ENCODE measurements at regions of chr17 and their contacts with region 1.

Region 1: DNA sequence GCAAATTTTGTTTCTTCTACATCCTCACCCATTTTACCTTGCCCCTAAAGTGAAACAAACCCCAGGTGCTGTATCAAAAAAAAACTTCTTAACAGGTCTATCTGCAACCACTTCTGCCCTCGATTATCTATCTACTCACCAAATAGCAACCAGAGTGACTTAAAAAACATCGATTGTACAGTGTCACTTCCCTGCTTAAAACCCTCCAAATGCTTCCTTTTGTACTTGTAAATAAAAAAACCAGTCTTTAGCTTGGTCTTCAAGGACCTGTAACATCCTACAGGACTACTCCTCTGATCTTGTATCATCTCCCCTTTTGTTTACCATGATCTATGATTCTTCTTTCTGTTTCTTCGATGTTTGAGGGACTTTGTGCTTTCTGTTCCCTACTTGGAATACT is 82.7 kb upstream of the CORO6 start:
- DNase-seq: no peak
- H3K4me3 Mint-ChIP-seq: peak overlapping the region; percentile 35
- H3K27ac Mint-ChIP-seq: peak overlapping the region; percentile 100
- H3K4me1 Mint-ChIP-seq: peaks cover 45% of the 10 kb centered on the region
- H3K27me3 Mint-ChIP-seq: no peaks in the 10 kb centered on the region

Region 2: DNA sequence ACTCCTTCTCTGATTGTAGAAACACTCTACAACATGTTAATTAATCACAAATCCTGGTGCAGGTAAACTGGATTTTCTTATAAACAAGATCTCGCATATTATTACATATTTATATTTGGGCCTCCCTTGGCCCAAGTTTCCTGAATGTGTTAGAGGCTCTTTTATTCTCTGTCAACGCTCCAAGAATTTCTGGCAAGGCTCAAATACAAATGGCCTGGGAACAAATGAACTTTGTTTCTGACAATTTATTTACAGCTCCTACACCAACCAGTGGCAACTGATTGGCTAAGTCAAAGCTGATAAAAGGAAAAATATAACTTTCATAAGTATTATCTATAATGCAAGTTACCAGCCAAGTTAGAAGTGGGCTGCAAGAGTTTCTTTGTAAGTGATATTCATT is 17.8 kb before region 1 on chr17:
- CTCF ChIA-PET with region 1: interaction called, 16 read pairs
- POLR2A ChIA-PET with region 1: interaction called, 47 read pairs
- DNase-seq: no peak
- H3K4me3 Mint-ChIP-seq: no peak overlapping the region
- H3K27ac Mint-ChIP-seq: no peak overlapping the region
- H3K4me1 Mint-ChIP-seq: peaks cover 17% of the 10 kb centered on the region
- H3K27me3 Mint-ChIP-seq: no peaks in the 10 kb centered on the region

Region 3: GRCh38 chr17:29693769-29694168 is 11.6 kb before region 1 on chr17:
- CTCF ChIA-PET with region 1: interaction called, 16 read pairs
- POLR2A ChIA-PET with region 1: interaction called, 47 read pairs
- DNase-seq: no peak
- H3K4me3 Mint-ChIP-seq: no peak overlapping the region
- H3K27ac Mint-ChIP-seq: peak overlapping the region; percentile 0
- H3K4me1 Mint-ChIP-seq: peaks cover 23% of the 10 kb centered on the region
- H3K27me3 Mint-ChIP-seq: no peaks in the 10 kb centered on the region

Region 4: DNA sequence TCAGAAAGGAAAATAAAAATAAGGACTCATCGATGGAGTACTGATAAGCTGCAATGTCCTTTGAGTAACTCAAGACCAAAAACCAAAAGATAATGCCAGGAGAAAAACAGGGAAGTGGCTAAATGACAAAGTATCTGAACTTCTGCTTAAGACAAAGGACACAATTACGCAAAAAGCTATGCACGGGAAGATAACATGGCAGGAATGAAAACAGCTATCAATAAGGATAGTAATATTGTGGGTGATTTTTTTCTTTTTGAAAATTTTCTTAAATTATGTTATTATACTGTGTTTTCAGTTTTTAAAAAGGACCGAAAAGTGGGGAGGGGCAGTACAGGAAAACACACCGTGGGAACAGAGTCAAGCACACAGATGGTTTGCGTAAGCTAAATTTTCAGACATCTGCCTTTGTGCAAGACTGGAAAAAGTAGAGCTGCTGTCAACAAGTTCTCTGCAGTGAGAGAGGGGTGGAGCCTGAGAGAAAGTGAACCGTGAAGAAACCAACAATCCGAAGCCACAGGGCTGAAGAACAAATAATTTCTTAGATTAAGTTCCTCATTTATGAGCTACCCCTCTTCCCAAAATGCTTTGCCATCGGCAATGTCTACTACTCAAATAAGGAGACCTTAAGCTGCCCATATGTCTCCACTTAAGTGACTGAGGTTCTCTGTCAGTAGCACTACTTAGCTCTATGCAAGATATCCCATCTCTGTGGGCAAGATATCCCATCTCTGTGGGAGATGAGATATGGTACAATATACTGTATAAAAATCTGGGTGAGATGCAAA is 17.2 kb after region 1 on chr17:
- CTCF ChIA-PET with region 1: interaction called, 7 read pairs
- POLR2A ChIA-PET with region 1: interaction called, 31 read pairs
- DNase-seq: peak; percentile 26
- H3K4me3 Mint-ChIP-seq: no peak overlapping the region
- H3K27ac Mint-ChIP-seq: peak overlapping the region; percentile 4
- H3K4me1 Mint-ChIP-seq: peaks cover 50% of the 10 kb centered on the region
- H3K27me3 Mint-ChIP-seq: no peaks in the 10 kb centered on the region

Region 5: DNA sequence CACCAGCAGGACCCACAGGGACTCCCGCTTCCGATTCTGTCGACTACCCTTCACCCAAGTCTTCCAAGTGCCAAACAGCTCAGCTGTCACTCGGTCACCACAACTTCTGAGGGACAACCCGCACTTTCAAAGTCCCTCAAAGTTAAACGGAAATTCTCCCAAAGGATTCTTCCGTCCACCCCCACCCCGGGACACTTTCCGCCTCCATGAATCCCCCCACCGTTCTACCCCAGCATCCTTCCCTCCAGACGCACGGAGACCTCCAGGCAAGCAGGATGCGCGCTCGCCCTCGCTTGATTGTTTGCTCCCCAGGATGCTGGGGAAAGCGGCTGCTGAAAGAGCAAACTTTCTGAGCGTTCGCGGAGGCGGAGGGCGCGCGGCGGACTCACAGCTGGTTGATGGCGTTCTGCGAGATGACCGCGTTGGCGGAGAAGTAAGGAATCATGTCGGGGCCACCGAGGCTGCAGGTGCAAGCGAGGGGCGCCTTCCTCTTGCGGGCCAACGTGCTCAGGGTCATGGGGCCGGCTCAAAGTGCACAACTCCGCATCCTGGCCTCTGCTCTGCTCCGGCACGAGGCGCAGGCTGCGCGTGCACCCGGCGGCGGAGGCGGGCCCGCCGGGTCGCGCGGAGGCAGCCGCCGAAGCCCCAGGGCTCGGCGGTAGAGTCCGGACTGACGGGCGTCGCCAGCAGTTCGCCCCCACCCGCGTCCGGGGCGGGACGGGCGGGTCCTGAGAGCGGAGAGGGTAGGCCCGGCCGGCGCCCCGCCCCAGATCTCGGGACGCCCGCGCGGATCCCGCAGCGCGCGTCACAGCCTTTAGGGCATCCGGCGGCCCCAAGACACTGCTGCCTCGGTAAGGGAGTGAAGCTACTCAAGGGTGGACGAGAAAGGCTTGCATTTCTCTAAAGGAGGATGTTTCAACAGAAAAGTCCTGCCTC is 55.6 kb after region 1 on chr17:
- CTCF ChIA-PET with region 1: no interaction called
- POLR2A ChIA-PET with region 1: interaction called, 94 read pairs
- DNase-seq: peak; percentile 95
- H3K4me3 Mint-ChIP-seq: peak overlapping the region; percentile 91
- H3K27ac Mint-ChIP-seq: peak overlapping the region; percentile 95
- H3K4me1 Mint-ChIP-seq: peaks cover 42% of the 10 kb centered on the region
- H3K27me3 Mint-ChIP-seq: no peaks in the 10 kb centered on the region

Region 6: DNA sequence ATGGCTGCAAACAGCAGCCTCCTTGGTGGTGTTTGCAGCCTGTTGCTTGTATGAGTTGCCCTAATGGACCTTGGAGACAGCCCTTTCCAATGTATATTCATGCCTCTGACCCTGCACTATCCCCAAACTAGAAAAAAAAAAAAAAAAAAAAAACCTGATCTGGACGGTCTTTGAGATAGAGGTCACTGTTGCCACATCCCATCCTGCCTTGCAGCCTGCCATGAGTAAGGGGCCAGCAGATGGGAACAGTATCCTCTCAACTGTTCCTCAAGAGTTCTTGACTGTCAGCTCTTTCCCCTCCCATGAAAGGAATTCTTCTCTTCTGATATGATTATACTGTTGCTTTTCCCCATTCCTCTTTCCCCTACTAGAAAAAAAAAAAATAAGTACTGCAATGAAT is 72.3 kb after region 1 on chr17:
- CTCF ChIA-PET with region 1: interaction called, 10 read pairs
- POLR2A ChIA-PET with region 1: no interaction called
- DNase-seq: no peak
- H3K4me3 Mint-ChIP-seq: no peak overlapping the region
- H3K27ac Mint-ChIP-seq: no peak overlapping the region
- H3K4me1 Mint-ChIP-seq: peaks cover 9% of the 10 kb centered on the region
- H3K27me3 Mint-ChIP-seq: no peaks in the 10 kb centered on the region

Measured in activated CD4-positive, alpha-beta memory T cell treated with anti-CD3 and anti-CD28 coated beads, Interleukin-2, amount 10 ng/mL, durations not matched to agents 7 days and 5 days (primary cell).